GM23248 (cell line): ENCODE measurements at regions of chr5 and their contacts with region 1.

Region 1: GRCh38 chr5:17189381-17190036 is 27.9 kb upstream of the BASP1 start:
- DNase-seq: peak; percentile 84
- H3K4me3 ChIP-seq: peak overlapping the region; percentile 27; the same call in 1 of the 2 replicates
- H3K27ac ChIP-seq: peak overlapping the region; percentile 55
- H3K4me1 ChIP-seq: peaks cover 55% of the 10 kb centered on the region
- H3K27me3 ChIP-seq: no peaks in the 10 kb centered on the region

Region 2: GRCh38 chr5:16477541-16477940 is 712.0 kb before region 1 on chr5:
- in situ Hi-C with region 1: loop called (anchors 10 kb)
- DNase-seq: no peak
- H3K4me3 ChIP-seq: no peak overlapping the region
- H3K27ac ChIP-seq: no peak overlapping the region
- H3K4me1 ChIP-seq: no peaks in the 10 kb centered on the region
- H3K27me3 ChIP-seq: no peaks in the 10 kb centered on the region

Region 3: DNA sequence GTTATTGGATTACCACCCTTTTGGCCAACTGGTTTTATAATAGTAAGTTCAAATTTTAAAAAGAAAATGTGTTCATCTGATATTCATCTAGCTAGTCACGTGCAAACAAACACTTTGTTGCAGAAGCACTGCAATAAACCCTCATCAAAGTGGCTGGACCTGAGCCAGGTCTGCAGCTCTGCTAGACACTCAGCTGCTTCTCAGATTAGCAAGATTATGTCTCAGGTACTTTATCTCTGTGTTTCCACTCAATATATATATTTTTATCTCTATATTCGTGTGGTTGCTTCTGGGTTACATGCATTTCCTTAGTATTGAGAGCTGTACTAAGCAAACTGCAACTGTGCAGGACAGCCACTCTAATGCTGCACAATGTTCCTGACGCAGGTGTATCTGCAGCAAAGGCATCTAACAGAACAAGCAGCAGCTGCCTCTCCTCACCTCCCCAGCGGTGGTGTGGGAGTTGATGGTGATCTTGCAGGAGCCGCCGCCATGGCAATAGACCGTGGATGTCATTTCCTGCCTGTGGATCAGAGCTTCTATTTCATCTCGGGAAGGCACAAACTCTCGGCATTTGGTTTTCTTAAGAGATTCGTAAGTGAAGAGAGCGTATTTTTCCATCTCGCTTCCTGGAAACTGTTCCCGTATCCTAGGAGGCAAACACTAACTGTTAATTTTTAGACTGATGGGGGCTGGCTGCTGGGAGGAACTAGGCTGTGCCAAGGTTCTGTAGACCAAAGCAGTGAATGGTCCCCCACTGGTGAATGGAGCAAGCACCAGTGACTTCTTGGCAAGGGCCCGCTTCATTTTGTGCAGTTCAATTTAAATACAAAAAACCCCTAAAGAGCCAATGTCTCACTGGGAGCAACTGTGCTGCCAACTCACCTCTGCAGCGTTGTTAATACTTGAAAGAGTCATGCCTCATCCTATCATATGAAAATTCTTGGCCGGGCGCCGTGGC is 516.0 kb before region 1 on chr5:
- in situ Hi-C with region 1: loop called (anchors 10 kb)
- DNase-seq: no peak
- H3K4me3 ChIP-seq: no peak overlapping the region
- H3K27ac ChIP-seq: no peak overlapping the region
- H3K4me1 ChIP-seq: no peaks in the 10 kb centered on the region
- H3K27me3 ChIP-seq: no peaks in the 10 kb centered on the region

Region 4: DNA sequence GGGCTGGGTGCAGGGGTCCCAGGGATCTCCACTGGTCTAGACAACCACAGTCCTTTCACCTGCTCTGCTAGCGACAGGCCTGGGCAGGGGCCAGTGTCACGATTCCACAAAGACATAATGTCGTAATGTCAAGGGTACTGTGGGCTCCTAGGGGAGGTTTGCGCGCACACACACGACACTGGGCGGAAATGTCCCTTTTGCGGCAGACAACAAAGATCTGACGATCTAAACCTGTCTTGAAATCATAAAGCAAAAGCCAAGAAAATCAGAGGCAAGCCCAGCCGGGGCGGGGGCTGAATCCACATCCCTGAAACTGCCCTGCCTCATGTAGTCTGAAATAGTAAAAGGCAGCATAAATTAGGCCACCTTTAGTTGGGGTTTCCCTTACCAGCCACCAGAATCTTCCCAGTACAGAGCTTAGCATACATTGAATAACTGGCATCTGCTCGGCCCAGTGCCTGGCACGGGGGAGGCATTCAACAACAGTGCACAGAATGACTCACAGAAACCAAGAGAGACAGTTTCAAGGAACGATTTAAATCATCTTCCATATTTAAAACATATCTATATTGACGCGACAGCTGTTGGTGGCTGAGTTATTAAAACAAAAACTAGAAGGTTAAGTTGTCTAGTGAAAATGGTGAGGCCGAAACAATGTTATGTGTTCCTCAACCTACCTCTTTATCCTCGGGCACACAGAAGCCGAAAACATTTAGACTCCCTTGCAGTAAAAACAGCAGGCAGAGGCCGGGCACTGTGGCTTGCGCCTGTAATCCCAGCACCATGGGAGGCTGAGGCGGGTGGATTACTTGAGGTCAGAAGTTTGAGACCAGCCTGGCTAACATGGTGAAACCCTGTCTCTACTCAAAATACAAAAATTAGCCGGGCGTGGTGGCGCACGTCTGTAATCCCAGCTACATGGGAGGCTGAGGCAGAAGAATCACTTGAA is 404.4 kb before region 1 on chr5:
- in situ Hi-C with region 1: loop called (anchors 5 kb)
- DNase-seq: peak; percentile 32
- H3K4me3 ChIP-seq: no peak overlapping the region
- H3K27ac ChIP-seq: no peak overlapping the region; the same call in 1 of the 2 replicates
- H3K4me1 ChIP-seq: peaks cover 21% of the 10 kb centered on the region
- H3K27me3 ChIP-seq: no peaks in the 10 kb centered on the region

Region 5: DNA sequence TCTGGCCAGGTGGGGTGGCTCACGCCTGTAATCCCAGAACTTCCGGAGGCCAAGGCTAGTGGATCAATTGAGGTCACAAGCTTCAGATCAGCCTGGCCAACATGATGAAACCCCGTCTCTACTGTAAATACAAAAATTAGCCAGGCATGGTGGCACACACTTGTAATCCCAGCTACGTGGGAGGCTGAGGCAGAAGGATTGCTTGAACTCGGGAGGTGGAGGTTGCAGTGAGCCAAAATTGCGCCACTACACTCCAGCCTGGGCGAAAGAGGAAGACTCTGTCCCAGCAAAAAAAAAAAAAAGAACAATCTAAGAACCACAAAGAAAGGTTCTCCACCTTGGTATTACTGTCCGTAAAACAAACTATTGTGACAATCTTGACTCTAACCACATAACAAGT is 263.1 kb before region 1 on chr5:
- in situ Hi-C with region 1: loop called (anchors 5 kb)
- DNase-seq: no peak
- H3K4me3 ChIP-seq: no peak overlapping the region
- H3K27ac ChIP-seq: no peak overlapping the region
- H3K4me1 ChIP-seq: 0 out of 2 replicates have a peak, but pooled peaks cover 2% of the 10 kb centered on the region
- H3K27me3 ChIP-seq: no peaks in the 10 kb centered on the region

Region 6: GRCh38 chr5:17727191-17727590 is 537.7 kb after region 1 on chr5:
- in situ Hi-C with region 1: no loop called
- DNase-seq: no peak
- H3K4me3 ChIP-seq: no peak overlapping the region
- H3K27ac ChIP-seq: no peak overlapping the region
- H3K4me1 ChIP-seq: no peaks in the 10 kb centered on the region
- H3K27me3 ChIP-seq: no peaks in the 10 kb centered on the region